Motor neuron (in vitro differentiated cells): ENCODE measurements at regions of chr1 and their contacts with region 1.

Region 1: DNA sequence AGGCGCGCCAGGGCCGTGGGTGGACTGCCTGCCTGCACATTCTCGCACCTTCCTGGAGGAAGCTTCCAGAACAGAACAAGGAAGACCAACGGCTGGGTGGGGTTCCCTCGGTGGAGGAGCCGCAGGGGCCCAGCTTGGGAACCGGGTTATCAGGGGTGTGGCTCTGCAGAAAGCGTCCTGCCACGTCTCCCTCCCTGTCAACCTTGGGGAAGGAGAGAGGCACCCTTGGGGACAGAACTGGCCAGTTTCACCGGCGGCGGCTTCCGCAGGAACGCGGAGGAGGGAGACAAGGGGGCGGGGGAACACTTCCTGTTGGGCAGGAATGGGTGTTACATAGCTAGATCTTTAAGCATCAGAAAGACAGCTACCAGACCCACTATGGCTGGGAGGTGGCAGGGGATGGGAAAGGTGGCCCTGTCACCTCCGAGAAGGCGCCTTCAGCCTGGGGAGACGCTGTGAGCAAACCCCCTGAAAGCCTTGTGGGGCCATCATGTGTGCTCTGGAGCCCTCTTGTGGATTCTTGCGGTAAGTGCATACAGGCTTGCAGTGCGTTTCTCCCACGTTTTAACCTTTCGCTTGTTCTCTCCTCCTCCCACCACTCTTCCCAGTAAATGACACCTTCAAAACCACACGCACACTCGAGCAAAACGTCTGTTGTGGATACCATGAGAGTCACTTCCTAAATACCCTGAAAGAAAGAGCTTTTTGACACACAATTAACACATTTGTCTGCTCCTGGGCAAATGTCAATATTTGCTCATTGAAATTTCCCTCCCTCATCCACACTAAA is 3.8 kb upstream of the PLEKHA6 start:
- ATAC-seq: peak in 6 of 8 experiments; percentile 2 to 73 (median 34)
- H3K4me3 ChIP-seq: peak overlapping the region in 4 of 5 donors; percentile 3 to 18 (median 12)
- H3K27ac ChIP-seq: peak overlapping the region; percentile 0 to 19
- H3K4me1 ChIP-seq: peaks cover 18% of the 10 kb centered on the region in 2 donors

Region 2: GRCh38 chr1:203861379-203862184 is 501.9 kb before region 1 on chr1 and contains the start of gene SNRPE:
- in situ Hi-C with region 1: loop called in 2 of 9 experiments (anchors 10 to 25 kb)
- ATAC-seq: peak; percentile 89 to 99 (median 96)
- H3K4me3 ChIP-seq: peak within 1 kb of the TSS; percentile 72 to 84 (median 78)
- H3K27ac ChIP-seq: peak within 1 kb of the TSS; percentile 72 to 85
- H3K4me1 ChIP-seq: peaks cover 6 to 10% of the 10 kb centered on the region in 2 donors
- total RNA-seq, gene SNRPE: 104 to 392 (median 191) TPM

Region 3: GRCh38 chr1:204257954-204258752 is 105.4 kb before region 1 on chr1:
- in situ Hi-C with region 1: loop called in 4 of 9 experiments (anchors 25 kb)
- ATAC-seq: peak; percentile 28 to 69 (median 58)
- H3K4me3 ChIP-seq: no peak overlapping the region
- H3K27ac ChIP-seq: no peak overlapping the region
- H3K4me1 ChIP-seq: peaks cover 29% of the 10 kb centered on the region in 2 donors

Region 4: DNA sequence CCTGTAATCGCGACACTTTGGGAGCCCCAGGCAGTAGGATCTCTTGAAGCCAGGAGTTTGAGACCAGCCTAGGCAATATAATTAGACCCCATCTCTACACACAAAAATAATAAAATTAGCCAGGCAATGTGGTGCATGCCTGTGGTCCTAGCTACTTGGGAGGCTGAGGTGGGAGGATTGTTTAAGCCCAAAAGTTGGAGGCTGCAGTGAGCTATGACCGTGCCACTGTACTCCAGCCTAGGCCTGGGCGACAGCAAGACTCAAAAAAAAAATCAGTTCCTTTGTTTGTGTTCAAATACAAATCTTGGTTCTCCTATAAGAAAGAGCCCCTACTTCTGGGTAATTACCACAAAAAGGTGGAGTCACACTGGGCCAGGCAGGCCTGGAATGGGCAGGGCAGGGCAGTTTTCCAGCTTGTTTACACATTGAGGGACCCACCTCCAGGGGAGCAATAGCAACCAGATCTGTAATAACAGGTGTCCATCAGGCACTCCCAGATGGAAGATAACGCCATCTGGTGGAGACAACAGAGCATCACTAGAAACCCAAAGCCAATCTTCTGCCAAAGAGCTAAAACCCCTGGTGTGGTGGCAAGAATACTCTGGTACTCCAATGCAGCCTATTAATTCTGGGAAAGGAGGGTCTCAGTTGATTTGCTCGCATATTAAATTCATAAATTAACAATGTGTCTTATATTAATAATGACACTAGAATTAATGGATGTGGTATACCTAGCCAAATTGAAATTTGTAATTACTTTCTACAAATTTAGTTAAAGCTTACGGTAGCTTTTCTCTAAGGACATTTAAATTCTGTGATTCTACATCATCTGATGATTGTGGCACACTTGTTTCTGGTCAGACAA is 34.9 kb after region 1 on chr1:
- in situ Hi-C with region 1: no loop called
- ATAC-seq: peak; percentile 64 to 97 (median 78)
- H3K4me3 ChIP-seq: no peak overlapping the region
- H3K27ac ChIP-seq: no peak overlapping the region
- H3K4me1 ChIP-seq: no peaks in the 10 kb centered on the region